Spleen (tissue), 13 donors: ENCODE measurements at regions of chr1 and their contacts with region 1.

Region 1: GRCh38 chr1:14915356-14916054 is 238.0 kb upstream of the TMEM51 start:
- DNase-seq: no peak
- H3K4me3 ChIP-seq: no peak overlapping the region
- H3K27ac ChIP-seq: peak overlapping the region in 3 of 8 donors; percentile 31 to 76 (median 33)
- H3K4me1 ChIP-seq: peaks cover 8 to 48% (median 24%) of the 10 kb centered on the region in 6 donors
- H3K27me3 ChIP-seq: peaks cover 0 to 3% (median 0%) of the 10 kb centered on the region in 7 donors
- CTCF ChIP-seq: peak; percentile 24 to 93 (median 82)
- POLR2A ChIP-seq: no peak

Region 2: DNA sequence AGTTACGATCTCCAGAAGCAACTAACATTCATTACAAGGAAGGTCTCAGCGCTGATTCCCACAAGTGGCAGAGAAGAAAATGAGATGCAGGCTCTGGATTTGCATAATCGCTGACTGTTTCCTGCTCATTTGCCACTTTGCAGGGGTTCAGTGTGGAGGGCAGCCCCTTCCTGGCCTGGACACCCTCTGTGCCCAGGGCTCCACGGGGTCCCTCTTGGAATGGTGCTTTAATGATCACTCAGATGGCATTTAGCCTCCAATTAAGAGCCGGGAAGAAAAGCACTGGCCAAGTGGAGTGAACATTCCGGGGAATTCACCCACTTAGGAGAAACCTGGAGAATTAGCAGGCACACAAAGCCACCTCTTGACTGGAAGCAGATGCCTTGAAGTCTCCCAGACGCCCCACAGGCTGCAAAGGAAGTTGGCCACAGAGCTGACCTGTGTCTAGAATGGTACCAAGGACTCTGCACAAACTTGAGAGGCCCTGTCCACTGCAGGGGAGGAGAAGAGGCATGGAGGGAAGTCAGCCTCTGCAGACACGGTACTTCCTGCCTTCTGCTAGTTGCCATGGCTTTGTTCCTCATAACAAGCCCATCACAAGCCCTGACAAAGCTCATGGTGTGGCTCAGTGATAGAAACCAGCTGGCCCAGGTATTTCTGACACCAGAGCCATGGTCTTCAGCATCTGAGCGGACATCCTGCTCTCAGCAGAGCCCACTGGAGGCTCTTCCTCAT is 159.8 kb before region 1 on chr1:
- intact Hi-C with region 1: no loop called
- DNase-seq: no peak
- H3K4me3 ChIP-seq: no peak overlapping the region
- H3K27ac ChIP-seq: no peak overlapping the region
- H3K4me1 ChIP-seq: no peaks in the 10 kb centered on the region
- H3K27me3 ChIP-seq: no peaks in the 10 kb centered on the region
- CTCF ChIP-seq: no peak
- POLR2A ChIP-seq: no peak

Region 3: GRCh38 chr1:14810595-14811361 is 104.7 kb before region 1 on chr1:
- intact Hi-C with region 1: loop called (anchors 10 kb)
- DNase-seq: peak; percentile 89
- H3K4me3 ChIP-seq: no peak overlapping the region
- H3K27ac ChIP-seq: peak overlapping the region in 6 of 8 donors; percentile 52 to 70 (median 64)
- H3K4me1 ChIP-seq: peaks cover 0 to 42% (median 13%) of the 10 kb centered on the region in 6 donors
- H3K27me3 ChIP-seq: no peaks in the 10 kb centered on the region
- CTCF ChIP-seq: no peak
- POLR2A ChIP-seq: no peak

Region 4: GRCh38 chr1:14980621-14981218 is 65.2 kb after region 1 on chr1:
- intact Hi-C with region 1: no loop called
- DNase-seq: no peak
- H3K4me3 ChIP-seq: no peak overlapping the region
- H3K27ac ChIP-seq: peak overlapping the region in 5 of 8 donors; percentile 27 to 66 (median 53)
- H3K4me1 ChIP-seq: peaks cover 0 to 66% (median 34%) of the 10 kb centered on the region in 6 donors
- H3K27me3 ChIP-seq: no peaks in the 10 kb centered on the region
- CTCF ChIP-seq: no peak
- POLR2A ChIP-seq: no peak

Region 5: GRCh38 chr1:15062479-15063099 is 147.1 kb after region 1 on chr1:
- intact Hi-C with region 1: no loop called
- DNase-seq: no peak
- H3K4me3 ChIP-seq: no peak overlapping the region
- H3K27ac ChIP-seq: peak overlapping the region in 1 of 8 donors; percentile 33
- H3K4me1 ChIP-seq: peaks cover 0 to 29% (median 4%) of the 10 kb centered on the region in 6 donors
- H3K27me3 ChIP-seq: no peaks in the 10 kb centered on the region
- CTCF ChIP-seq: peak in 8 of 11 experiments; percentile 14 to 61 (median 51)
- POLR2A ChIP-seq: no peak

Region 6: GRCh38 chr1:15088281-15088971 is 172.9 kb after region 1 on chr1:
- intact Hi-C with region 1: no loop called
- DNase-seq: peak; percentile 35
- H3K4me3 ChIP-seq: no peak overlapping the region
- H3K27ac ChIP-seq: peak overlapping the region in 6 of 8 donors; percentile 25 to 64 (median 48)
- H3K4me1 ChIP-seq: peaks cover 13 to 34% (median 24%) of the 10 kb centered on the region in 6 donors
- H3K27me3 ChIP-seq: peaks cover 0 to 5% (median 0%) of the 10 kb centered on the region in 7 donors
- CTCF ChIP-seq: no peak
- POLR2A ChIP-seq: no peak